H1 (cell line): ENCODE measurements at regions of chr2 and their contacts with region 1.

Region 1: DNA sequence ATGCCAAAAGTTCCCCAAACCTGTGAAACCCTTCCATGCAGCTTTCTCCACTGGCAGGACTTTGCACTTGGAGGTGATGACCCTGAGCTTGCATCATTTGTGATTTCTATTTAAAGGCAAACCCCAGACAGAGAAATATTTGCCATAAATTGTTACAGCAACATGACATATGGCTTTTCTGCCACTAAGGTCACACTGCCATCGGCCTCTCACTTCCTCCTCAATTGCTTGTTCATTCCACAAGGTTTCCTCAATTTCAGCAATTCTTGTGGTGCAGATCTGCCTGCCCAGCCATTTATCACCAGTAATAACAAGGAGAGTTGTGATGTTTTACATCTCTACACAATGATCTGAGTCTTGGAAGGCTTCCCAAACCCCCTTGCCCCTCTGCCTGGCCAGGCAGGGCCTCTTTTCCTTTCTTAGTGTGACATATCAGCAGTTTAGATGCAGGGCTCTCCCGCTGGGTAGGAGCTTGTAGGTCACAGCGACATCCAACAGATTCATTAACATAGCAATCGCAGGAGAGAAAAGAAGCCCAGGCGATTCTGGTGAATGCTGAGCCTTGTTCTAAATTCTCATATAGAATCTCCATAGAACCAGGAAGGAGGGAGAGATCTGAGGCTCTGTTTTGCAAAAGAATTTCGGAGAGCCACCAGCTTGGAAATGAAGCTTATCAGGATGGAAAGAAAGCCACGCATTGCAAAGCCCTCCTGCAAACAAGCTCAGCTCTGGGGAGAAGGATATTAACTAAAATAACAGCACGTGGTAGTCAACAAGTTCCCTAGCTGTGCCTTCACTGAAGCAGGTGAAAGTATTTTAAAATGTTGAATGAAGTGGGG is 46.7 kb upstream of the ITGA6 start:
- DNase-seq: peak; percentile 72 to 88
- H3K4me3 ChIP-seq: peak overlapping the region in 3 of 4 experiments; percentile 18 to 46 (median 27); a peak in 5 of 8 replicates
- H3K27ac ChIP-seq: peak overlapping the region; percentile 97
- H3K4me1 ChIP-seq: peaks cover 15 to 24% (median 19%) of the 10 kb centered on the region in 4 experiments
- H3K27me3 ChIP-seq: no peaks in the 10 kb centered on the region; a peak in 3 of 7 replicates
- CTCF ChIP-seq: no peak
- EP300 ChIP-seq: peak in 1 of 2 experiments; percentile 73; a peak in 1 of 3 replicates
- POLR2A ChIP-seq: peak; percentile 40 to 52
- RAD21 ChIP-seq: peak; percentile 3 to 13; a peak in 3 of 4 replicates

Region 2: GRCh38 chr2:172234716-172235691 is 145.7 kb before region 1 on chr2:
- CTCF ChIA-PET with region 1: no interaction called
- POLR2A ChIA-PET with region 1: interaction called, 12 read pairs
- DNase-seq: peak in 1 of 2 experiments; percentile 79
- H3K4me3 ChIP-seq: peak overlapping the region; percentile 44 to 64 (median 53)
- H3K27ac ChIP-seq: no peak overlapping the region
- H3K4me1 ChIP-seq: peaks cover 3 to 20% (median 16%) of the 10 kb centered on the region in 4 experiments; a peak in 6 of 7 replicates
- H3K27me3 ChIP-seq: peaks cover 0 to 28% (median 17%) of the 10 kb centered on the region in 4 experiments; a peak in 5 of 7 replicates
- CTCF ChIP-seq: no peak
- EP300 ChIP-seq: no peak
- POLR2A ChIP-seq: 0 out of 3 replicates have a peak, but pooled peaks of 1 of the 2 experiments have one; percentile 21
- RAD21 ChIP-seq: peak in 1 of 2 experiments; percentile 28; a peak in 1 of 4 replicates

Region 3: DNA sequence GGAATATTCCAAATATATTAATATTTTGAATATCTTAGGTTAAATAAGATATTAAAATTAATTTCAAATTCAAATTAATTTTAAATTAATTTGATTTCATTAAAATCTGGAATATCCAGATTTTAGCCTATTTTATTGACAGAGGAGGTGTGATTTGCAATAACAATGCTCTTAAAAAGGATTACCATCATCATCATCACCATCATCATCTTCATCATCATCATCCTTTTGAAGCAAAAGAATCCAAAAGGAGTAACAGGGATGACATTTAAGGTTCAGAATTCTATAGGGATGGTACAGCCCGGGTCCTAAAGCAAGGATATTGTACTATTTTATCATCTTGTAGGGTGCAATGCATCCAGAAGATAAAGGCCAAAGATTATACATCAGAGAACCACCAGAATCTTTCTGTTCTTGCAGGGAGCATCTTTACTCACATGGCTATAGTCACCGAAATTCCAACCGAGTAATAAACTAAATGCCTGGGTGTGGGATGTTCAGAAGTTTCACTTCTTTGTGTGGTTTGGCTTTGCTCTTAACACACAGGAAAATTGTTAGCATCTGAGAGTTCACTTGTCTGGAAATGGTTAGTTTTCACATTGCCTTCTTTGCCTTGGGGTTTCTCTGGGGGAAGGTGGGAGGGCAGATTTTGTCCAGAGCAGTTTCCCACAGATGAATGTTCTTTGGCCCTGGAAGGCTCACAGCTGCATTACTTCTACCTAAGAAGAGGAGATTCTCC is 52.4 kb before region 1 on chr2:
- CTCF ChIA-PET with region 1: no interaction called
- POLR2A ChIA-PET with region 1: no interaction called
- DNase-seq: no peak
- H3K4me3 ChIP-seq: no peak overlapping the region
- H3K27ac ChIP-seq: no peak overlapping the region
- H3K4me1 ChIP-seq: no peaks in the 10 kb centered on the region
- H3K27me3 ChIP-seq: no peaks in the 10 kb centered on the region
- CTCF ChIP-seq: no peak
- EP300 ChIP-seq: no peak
- POLR2A ChIP-seq: no peak
- RAD21 ChIP-seq: no peak

Region 4: GRCh38 chr2:172366596-172367150 is 14.0 kb before region 1 on chr2:
- CTCF ChIA-PET with region 1: interaction called, 7 read pairs
- POLR2A ChIA-PET with region 1: interaction called, 13 read pairs
- DNase-seq: no peak
- H3K4me3 ChIP-seq: no peak overlapping the region
- H3K27ac ChIP-seq: no peak overlapping the region
- H3K4me1 ChIP-seq: no peaks in the 10 kb centered on the region
- H3K27me3 ChIP-seq: no peaks in the 10 kb centered on the region
- CTCF ChIP-seq: no peak
- EP300 ChIP-seq: no peak
- POLR2A ChIP-seq: no peak
- RAD21 ChIP-seq: no peak

Region 5: DNA sequence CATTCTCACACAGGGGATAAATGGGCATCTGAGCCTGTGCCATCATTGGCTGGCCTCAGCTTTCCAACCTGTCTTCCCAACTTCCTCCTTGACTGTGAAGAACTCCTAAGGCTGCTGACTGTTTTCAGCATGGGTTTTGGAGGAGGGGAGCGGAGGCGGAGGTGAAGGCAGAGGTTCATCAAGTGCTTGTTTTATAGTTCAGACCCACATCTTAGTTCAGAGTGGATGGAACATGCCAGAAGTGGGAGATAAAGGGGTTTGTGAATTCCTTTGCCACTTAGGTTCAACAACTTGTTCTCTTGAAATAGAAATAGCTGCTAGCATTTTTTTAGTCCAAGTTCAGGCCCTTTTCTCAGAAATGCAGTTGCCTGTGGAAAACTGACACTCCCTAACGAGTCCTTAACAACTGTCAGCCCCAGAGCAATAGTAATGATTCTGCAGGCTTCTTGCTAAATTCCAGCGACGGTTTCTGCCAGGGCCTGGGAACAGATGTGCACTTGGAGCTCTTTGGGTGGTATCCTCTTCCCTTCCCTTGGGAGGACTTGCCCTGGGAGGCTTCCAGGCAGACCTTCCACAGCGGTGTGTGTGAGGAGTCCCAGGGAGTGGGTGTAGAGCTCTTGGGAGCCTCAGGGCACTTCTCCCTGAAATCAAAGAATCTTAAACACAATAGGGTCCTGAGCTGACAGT is 16.6 kb after region 1 on chr2:
- CTCF ChIA-PET with region 1: interaction called, 12 read pairs
- POLR2A ChIA-PET with region 1: interaction called, 10 read pairs
- DNase-seq: no peak
- H3K4me3 ChIP-seq: no peak overlapping the region
- H3K27ac ChIP-seq: no peak overlapping the region
- H3K4me1 ChIP-seq: no peaks in the 10 kb centered on the region
- H3K27me3 ChIP-seq: no peaks in the 10 kb centered on the region
- CTCF ChIP-seq: no peak
- EP300 ChIP-seq: no peak
- POLR2A ChIP-seq: no peak
- RAD21 ChIP-seq: no peak

Region 6: DNA sequence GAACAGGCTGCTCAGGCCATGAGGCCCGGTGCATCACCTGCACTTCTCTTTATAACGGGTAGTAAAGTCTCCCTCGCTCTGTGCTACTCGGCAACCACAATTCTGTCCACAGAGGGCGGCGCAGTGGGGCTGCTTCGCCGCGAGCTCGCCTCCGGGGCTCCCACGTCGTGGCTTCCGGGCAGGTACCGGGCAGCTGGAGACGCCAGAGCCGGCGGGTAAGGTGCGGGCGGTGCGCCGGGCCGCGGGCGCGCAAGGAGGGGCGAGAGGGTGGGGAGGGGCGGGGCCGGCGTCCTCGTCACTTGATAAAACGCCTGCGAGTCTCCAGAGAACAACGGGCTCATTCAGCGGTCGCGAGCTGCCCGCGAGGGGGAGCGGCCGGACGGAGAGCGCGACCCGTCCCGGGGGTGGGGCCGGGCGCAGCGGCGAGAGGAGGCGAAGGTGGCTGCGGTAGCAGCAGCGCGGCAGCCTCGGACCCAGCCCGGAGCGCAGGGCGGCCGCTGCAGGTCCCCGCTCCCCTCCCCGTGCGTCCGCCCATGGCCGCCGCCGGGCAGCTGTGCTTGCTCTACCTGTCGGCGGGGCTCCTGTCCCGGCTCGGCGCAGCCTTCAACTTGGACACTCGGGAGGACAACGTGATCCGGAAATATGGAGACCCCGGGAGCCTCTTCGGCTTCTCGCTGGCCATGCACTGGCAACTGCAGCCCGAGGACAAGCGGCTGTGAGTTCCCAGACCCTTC is 46.8 kb after region 1 on chr2 and contains the start of gene ITGA6:
- CTCF ChIA-PET with region 1: interaction called, 8 read pairs
- POLR2A ChIA-PET with region 1: interaction called, 24 read pairs
- DNase-seq: peak in 1 of 2 experiments; percentile 82
- H3K4me3 ChIP-seq: peak within 1 kb of the TSS; percentile 78 to 88 (median 84)
- H3K27ac ChIP-seq: peak within 1 kb of the TSS; percentile 70
- H3K4me1 ChIP-seq: peaks cover 4 to 24% (median 11%) of the 10 kb centered on the region in 4 experiments; a peak in 5 of 7 replicates
- H3K27me3 ChIP-seq: peaks cover 0 to 3% (median 1%) of the 10 kb centered on the region in 4 experiments; a peak in 3 of 7 replicates
- CTCF ChIP-seq: peak in 1 of 3 experiments; percentile 32; a peak in 2 of 4 replicates
- EP300 ChIP-seq: no peak
- POLR2A ChIP-seq: peak; percentile 60 to 83
- RAD21 ChIP-seq: peak; percentile 6 to 27; a peak in 2 of 4 replicates
- total RNA-seq, gene ITGA6: 117 and 118 TPM in 2 replicates